CD8-positive, alpha-beta T cell (primary cell): ENCODE measurements at regions of chr9 and their contacts with region 1.

Region 1: GRCh38 chr9:3809724-3810123 is 283.9 kb upstream of the RFX3 start:
- DNase-seq: no peak
- ATAC-seq: no peak
- H3K4me3 ChIP-seq: no peak overlapping the region
- H3K4me3 Mint-ChIP-seq: no peak overlapping the region
- H3K27ac ChIP-seq: no peak overlapping the region
- H3K27ac Mint-ChIP-seq: no peak overlapping the region
- H3K4me1 ChIP-seq: no peaks in the 10 kb centered on the region
- H3K4me1 Mint-ChIP-seq: no peaks in the 10 kb centered on the region
- H3K27me3 ChIP-seq: peaks cover 0 to 3% of the 10 kb centered on the region in 2 experiments
- H3K27me3 Mint-ChIP-seq: peaks cover 8% of the 10 kb centered on the region
- CTCF ChIP-seq: no peak

Region 2: DNA sequence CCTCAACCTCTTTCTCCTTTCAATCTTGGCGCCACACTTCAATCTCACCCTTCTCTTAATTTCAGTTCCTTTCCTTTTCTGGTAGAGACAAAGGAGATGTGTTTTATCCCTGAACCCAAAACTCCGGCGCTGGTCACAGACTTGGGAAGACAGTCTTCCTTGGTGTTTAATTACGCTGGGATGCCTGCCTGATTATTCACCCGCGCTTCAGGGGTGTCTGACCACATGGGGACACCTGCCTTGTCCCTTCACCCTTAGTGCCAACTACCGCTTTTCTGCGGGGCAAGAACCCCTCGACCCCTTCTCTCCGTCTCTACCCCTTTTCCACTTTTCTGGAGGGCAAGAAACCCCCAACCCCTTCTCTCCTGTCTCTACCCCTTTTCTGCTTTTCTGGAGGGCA is 1533.4 kb before region 1 on chr9:
- CTCF ChIA-PET with region 1: no interaction called
- POLR2A ChIA-PET with region 1: no interaction called
- intact Hi-C with region 1: loop called in 1 of 2 experiments (anchors 5 kb)
- DNase-seq: no peak
- ATAC-seq: no peak
- H3K4me3 ChIP-seq: no peak overlapping the region
- H3K4me3 Mint-ChIP-seq: no peak overlapping the region
- H3K27ac ChIP-seq: no peak overlapping the region
- H3K27ac Mint-ChIP-seq: no peak overlapping the region
- H3K4me1 ChIP-seq: no peaks in the 10 kb centered on the region
- H3K4me1 Mint-ChIP-seq: peaks cover under 1% of the 10 kb centered on the region
- H3K27me3 ChIP-seq: no peaks in the 10 kb centered on the region
- H3K27me3 Mint-ChIP-seq: peaks cover 5% of the 10 kb centered on the region
- CTCF ChIP-seq: no peak

Region 3: GRCh38 chr9:3458806-3459475 is 350.8 kb before region 1 on chr9:
- CTCF ChIA-PET with region 1: no interaction called
- POLR2A ChIA-PET with region 1: no interaction called
- intact Hi-C with region 1: loop called in 1 of 2 experiments (anchors 10 kb)
- DNase-seq: no peak
- ATAC-seq: no peak
- H3K4me3 ChIP-seq: no peak overlapping the region
- H3K4me3 Mint-ChIP-seq: no peak overlapping the region
- H3K27ac ChIP-seq: no peak overlapping the region
- H3K27ac Mint-ChIP-seq: no peak overlapping the region
- H3K4me1 ChIP-seq: no peaks in the 10 kb centered on the region
- H3K4me1 Mint-ChIP-seq: peaks cover 2% of the 10 kb centered on the region
- H3K27me3 ChIP-seq: no peaks in the 10 kb centered on the region
- H3K27me3 Mint-ChIP-seq: no peaks in the 10 kb centered on the region
- CTCF ChIP-seq: no peak

Region 4: DNA sequence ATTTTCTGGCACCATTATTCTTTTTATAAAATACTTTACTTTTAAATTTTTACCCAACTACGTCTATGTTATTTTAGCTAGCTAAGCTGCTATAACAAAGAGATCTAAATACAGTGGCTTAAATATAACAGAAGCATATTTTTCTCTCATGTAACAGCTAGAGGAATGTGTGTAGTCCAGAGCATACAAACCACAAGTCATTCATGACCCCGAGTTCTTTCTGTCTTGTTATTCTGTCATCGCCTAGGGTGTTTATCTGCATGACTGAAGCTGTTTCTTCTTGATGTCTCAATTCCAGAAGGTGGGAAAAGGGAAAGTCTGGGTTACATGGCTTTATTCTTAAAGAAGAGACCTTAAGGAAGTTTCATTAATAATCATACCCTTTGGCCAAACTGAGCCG is 147.1 kb before region 1 on chr9:
- CTCF ChIA-PET with region 1: no interaction called
- POLR2A ChIA-PET with region 1: no interaction called
- intact Hi-C with region 1: no loop called
- DNase-seq: no peak
- ATAC-seq: no peak
- H3K4me3 ChIP-seq: no peak overlapping the region
- H3K4me3 Mint-ChIP-seq: no peak overlapping the region
- H3K27ac ChIP-seq: no peak overlapping the region
- H3K27ac Mint-ChIP-seq: no peak overlapping the region
- H3K4me1 ChIP-seq: no peaks in the 10 kb centered on the region
- H3K4me1 Mint-ChIP-seq: no peaks in the 10 kb centered on the region
- H3K27me3 ChIP-seq: no peaks in the 10 kb centered on the region
- H3K27me3 Mint-ChIP-seq: no peaks in the 10 kb centered on the region
- CTCF ChIP-seq: no peak

Region 5: GRCh38 chr9:3746296-3747275 is 63.1 kb before region 1 on chr9:
- CTCF ChIA-PET with region 1: no interaction called
- POLR2A ChIA-PET with region 1: no interaction called
- intact Hi-C with region 1: loop called in 1 of 2 experiments (anchors 10 kb)
- DNase-seq: no peak
- ATAC-seq: no peak
- H3K4me3 ChIP-seq: no peak overlapping the region
- H3K4me3 Mint-ChIP-seq: no peak overlapping the region
- H3K27ac ChIP-seq: no peak overlapping the region
- H3K27ac Mint-ChIP-seq: no peak overlapping the region
- H3K4me1 ChIP-seq: no peaks in the 10 kb centered on the region
- H3K4me1 Mint-ChIP-seq: peaks cover 1% of the 10 kb centered on the region
- H3K27me3 ChIP-seq: no peaks in the 10 kb centered on the region
- H3K27me3 Mint-ChIP-seq: peaks cover 10% of the 10 kb centered on the region
- CTCF ChIP-seq: no peak